AG04449 (cell line): ENCODE measurements at regions of chr22 and their contacts with region 1.

Region 1: GRCh38 chr22:21952586-21953571 is at the start of gene PPM1F:
- DNase-seq: no peak
- H3K4me3 ChIP-seq: peak within 1 kb of the TSS; percentile 82
- CTCF ChIP-seq: peak; percentile 89

Region 2: GRCh38 chr22:21707677-21708076 is 245.2 kb before region 1 on chr22:
- CTCF ChIA-PET with region 1: interaction called, 268 read pairs
- POLR2A ChIA-PET with region 1: no interaction called
- DNase-seq: no peak
- H3K4me3 ChIP-seq: no peak overlapping the region
- CTCF ChIP-seq: no peak

Region 3: DNA sequence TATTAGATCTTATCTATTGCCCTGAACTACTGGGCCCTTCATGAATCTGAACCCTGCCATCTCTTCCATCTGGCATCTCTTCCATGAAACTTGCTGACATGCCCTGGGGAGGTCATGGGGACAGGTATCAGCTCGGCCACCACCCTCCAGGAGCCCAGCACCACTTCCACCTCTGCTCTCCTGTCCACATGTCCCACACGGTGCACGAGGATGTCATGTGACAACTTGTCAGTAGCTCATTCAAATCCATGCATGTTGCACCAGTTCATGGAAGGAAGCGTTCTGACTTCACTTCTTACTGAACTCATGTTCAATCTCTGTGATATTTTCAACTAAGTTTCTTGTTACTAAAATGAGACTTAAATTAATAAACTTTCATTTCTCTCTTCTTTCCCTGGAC is 233.9 kb before region 1 on chr22:
- CTCF ChIA-PET with region 1: interaction called, 268 read pairs
- POLR2A ChIA-PET with region 1: no interaction called
- DNase-seq: no peak
- H3K4me3 ChIP-seq: no peak overlapping the region
- CTCF ChIP-seq: no peak

Region 4: DNA sequence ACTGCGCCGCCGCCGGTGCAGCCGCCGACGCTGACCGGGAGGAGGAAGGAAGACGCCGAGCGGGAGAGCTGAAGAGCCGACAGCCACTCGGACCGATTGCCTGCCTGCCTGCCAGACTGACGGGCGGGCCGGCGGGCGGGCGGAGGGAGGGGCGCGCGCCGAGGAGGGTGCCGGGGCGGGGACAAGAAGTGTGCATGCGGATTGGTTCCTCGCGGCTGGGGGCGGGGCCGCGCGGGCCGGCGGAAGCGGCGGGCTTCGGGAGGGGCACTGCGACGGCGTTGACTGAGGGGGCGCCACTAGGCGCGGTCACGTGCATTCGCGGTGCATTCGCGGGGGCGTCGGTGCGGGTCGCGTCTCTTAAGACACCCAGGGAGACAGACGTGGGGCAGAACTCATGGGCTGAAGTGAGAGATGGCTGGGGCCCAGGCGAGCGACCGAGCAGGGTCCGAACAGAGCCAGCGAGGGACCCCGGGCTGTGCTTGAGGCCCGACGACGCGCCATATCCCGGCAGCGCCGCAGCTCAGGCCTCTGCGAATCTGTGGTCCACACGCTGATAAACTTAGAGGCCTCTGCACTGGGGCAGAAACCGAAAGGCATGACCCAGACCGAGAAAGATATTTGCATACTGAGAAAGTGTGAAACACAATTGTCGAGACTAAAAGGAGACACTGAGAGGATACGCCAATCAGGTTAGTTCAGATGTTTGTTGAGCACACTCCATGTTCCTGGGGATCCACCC is 85.2 kb before region 1 on chr22 and contains the start of gene MAPK1:
- CTCF ChIA-PET with region 1: no interaction called
- POLR2A ChIA-PET with region 1: no interaction called
- DNase-seq: no peak
- H3K4me3 ChIP-seq: peak within 1 kb of the TSS; percentile 84
- CTCF ChIP-seq: peak; percentile 50

Region 5: GRCh38 chr22:22030493-22031182 is 77.8 kb after region 1 on chr22:
- CTCF ChIA-PET with region 1: no interaction called
- POLR2A ChIA-PET with region 1: no interaction called
- DNase-seq: no peak
- H3K4me3 ChIP-seq: no peak overlapping the region
- CTCF ChIP-seq: peak; percentile 32